Calu3 (cell line): ENCODE measurements at regions of chr1 and their contacts with region 1.

Region 1: GRCh38 chr1:155308493-155309422 is at the start of gene FDPS:
- DNase-seq: peak; percentile 98
- H3K4me3 Mint-ChIP-seq: peak within 1 kb of the TSS; percentile 90
- H3K27ac Mint-ChIP-seq: peak within 1 kb of the TSS; percentile 97
- H3K4me1 Mint-ChIP-seq: peaks cover 60% of the 10 kb centered on the region
- H3K27me3 Mint-ChIP-seq: no peaks in the 10 kb centered on the region
- CTCF ChIP-seq: no peak
- total RNA-seq, gene FDPS: 329 and 410 TPM in 2 replicates

Region 2: GRCh38 chr1:155323798-155324610 is 15.2 kb after region 1 on chr1:
- CTCF ChIA-PET with region 1: interaction called, 9 read pairs
- intact Hi-C with region 1: loop called (anchors 1 kb)
- DNase-seq: peak; percentile 98
- H3K4me3 Mint-ChIP-seq: peak overlapping the region; percentile 90
- H3K27ac Mint-ChIP-seq: peak overlapping the region; percentile 60
- H3K4me1 Mint-ChIP-seq: peaks cover 41% of the 10 kb centered on the region
- H3K27me3 Mint-ChIP-seq: no peaks in the 10 kb centered on the region
- CTCF ChIP-seq: no peak